Upper lobe of right lung (tissue), 1 donor: ENCODE measurements at regions of chr3 and their contacts with region 1.

Region 1: DNA sequence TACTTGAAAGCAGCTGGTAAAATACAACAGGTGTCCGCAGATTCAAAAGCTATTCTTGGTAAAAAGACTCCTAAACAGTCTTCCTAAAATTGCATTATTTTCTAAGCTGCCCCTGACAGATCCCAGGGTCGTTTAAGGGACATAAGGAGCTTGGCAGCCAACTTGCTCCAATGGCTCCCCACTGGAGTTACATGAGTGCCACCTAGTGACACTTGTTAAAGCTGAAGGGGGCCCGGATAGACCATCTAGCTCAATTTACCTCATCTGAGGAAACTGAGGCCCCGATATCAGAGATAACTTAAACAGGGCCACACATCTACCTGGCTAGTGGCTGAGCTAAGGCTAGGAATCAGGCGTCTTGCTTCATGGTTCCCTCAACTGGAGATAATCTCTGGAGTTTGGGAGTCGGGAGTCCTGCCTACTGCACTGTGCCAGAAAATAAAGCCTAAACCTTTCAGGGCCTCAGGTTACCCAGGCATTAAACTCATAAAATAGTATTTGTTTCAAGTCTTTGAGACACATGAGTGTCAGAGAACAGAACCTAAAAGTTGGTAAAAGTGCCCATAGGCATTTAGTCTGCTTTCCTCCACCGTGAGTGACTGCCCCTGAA is 6.5 kb upstream of the TBC1D23 start:
- DNase-seq: no peak
- ATAC-seq: peak; percentile 90
- H3K4me3 ChIP-seq: no peak overlapping the region
- H3K27ac ChIP-seq: no peak overlapping the region
- H3K4me1 ChIP-seq: no peaks in the 10 kb centered on the region
- H3K27me3 ChIP-seq: no peaks in the 10 kb centered on the region
- CTCF ChIP-seq: peak; percentile 74

Region 2: GRCh38 chr3:99842826-99843589 is 411.3 kb before region 1 on chr3:
- intact Hi-C with region 1: loop called (anchors 10 kb)
- DNase-seq: no peak
- ATAC-seq: peak; percentile 84
- H3K4me3 ChIP-seq: no peak overlapping the region
- H3K27ac ChIP-seq: no peak overlapping the region
- H3K4me1 ChIP-seq: peaks cover 27% of the 10 kb centered on the region
- H3K27me3 ChIP-seq: no peaks in the 10 kb centered on the region
- CTCF ChIP-seq: peak; percentile 76

Region 3: DNA sequence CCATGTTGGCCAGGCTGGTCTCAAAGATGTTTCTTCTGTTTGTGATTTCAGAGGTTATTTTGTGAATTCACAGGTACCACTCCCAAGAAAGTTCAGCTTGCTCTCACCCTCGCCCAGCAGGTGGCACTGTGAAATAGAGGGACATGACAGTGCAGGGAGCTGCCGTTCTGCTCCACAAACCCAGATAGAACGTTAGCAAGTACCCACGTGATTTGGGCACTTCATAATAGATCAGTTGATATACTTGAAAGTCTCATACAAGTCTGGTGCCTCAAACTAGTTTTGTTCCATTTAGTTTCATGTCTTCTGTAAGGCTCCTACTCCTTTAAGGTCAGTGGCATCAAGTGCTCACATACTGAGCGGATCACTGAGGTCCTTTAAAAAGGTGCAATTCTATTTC is 185.4 kb before region 1 on chr3:
- intact Hi-C with region 1: loop called (anchors 10 kb)
- DNase-seq: peak; percentile 88
- ATAC-seq: peak; percentile 97
- H3K4me3 ChIP-seq: no peak overlapping the region
- H3K27ac ChIP-seq: no peak overlapping the region
- H3K4me1 ChIP-seq: peaks cover 18% of the 10 kb centered on the region
- H3K27me3 ChIP-seq: no peaks in the 10 kb centered on the region
- CTCF ChIP-seq: peak; percentile 80